A673 (cell line): ENCODE measurements at regions of chr11 and their contacts with region 1.

Region 1: GRCh38 chr11:15074206-15075161 is 1.1 kb downstream of the CALCB start:
- DNase-seq: peak; percentile 86
- H3K4me3 ChIP-seq: peak overlapping the region; percentile 48
- H3K27ac ChIP-seq: no peak overlapping the region
- H3K4me1 ChIP-seq: no peaks in the 10 kb centered on the region
- H3K27me3 ChIP-seq: no peaks in the 10 kb centered on the region
- CTCF ChIP-seq: peak; percentile 78

Region 2: GRCh38 chr11:14537134-14537599 is 537.3 kb before region 1 on chr11:
- CTCF ChIA-PET with region 1: no interaction called
- POLR2A ChIA-PET with region 1: no interaction called
- intact Hi-C with region 1: loop called (anchors 10 kb)
- DNase-seq: peak; percentile 43
- H3K4me3 ChIP-seq: no peak overlapping the region
- H3K27ac ChIP-seq: no peak overlapping the region
- H3K4me1 ChIP-seq: no peaks in the 10 kb centered on the region
- H3K27me3 ChIP-seq: no peaks in the 10 kb centered on the region
- CTCF ChIP-seq: peak; percentile 73

Region 3: DNA sequence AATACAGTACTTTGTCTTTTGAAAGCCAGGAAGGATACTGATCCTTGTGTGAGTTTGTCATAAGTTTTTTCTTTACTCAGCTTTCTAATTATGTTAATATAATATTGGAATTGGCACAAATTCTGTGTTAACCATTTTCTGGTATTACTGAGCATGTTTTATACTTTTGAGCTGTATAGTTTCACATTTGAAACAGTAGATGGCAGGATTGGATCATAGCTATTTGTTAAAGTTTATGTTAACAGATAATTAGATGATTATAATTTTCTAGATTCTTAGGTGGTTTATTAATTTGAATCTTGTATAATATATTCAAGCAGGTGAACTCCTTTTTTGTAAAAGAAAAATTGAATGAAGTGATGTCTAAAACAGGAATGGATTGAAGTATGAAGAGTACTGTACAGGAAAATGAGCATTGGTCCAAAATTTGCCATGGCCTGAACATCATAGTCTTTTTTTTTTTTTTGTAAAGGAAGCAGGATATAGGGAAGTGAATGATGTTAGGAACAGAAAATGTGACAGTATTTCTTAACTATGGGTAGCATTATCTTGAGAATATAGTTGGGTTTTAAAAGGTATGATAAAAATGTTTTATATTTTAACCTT is 284.5 kb before region 1 on chr11:
- CTCF ChIA-PET with region 1: interaction called, 4 read pairs
- POLR2A ChIA-PET with region 1: no interaction called
- intact Hi-C with region 1: loop called (anchors 5 kb)
- DNase-seq: peak; percentile 22
- H3K4me3 ChIP-seq: no peak overlapping the region
- H3K27ac ChIP-seq: no peak overlapping the region
- H3K4me1 ChIP-seq: peaks cover 17% of the 10 kb centered on the region
- H3K27me3 ChIP-seq: no peaks in the 10 kb centered on the region
- CTCF ChIP-seq: peak; percentile 67

Region 4: DNA sequence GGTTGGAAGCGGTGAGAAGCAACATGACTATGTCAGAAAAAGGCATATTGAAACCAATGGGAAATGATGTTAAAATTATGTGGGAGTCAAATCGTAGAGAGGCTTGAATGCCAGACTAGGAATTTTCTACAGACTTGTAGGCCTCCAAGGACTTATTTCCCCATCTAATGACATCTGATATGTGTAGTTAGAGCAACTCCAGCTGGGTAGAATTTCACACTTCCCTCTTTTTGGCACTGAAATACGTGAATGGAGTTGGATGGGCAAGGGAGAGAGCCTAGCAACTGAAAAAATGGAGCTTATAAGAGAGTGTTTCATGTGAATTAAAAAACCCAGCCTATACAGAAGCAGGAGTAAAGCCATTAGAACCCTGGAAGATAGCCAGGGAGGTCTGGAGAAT is 344.4 kb after region 1 on chr11:
- CTCF ChIA-PET with region 1: no interaction called
- POLR2A ChIA-PET with region 1: no interaction called
- intact Hi-C with region 1: no loop called
- DNase-seq: no peak
- H3K4me3 ChIP-seq: no peak overlapping the region
- H3K27ac ChIP-seq: no peak overlapping the region
- H3K4me1 ChIP-seq: no peaks in the 10 kb centered on the region
- H3K27me3 ChIP-seq: no peaks in the 10 kb centered on the region
- CTCF ChIP-seq: no peak

Region 5: GRCh38 chr11:15590132-15590531 is 515.6 kb after region 1 on chr11:
- CTCF ChIA-PET with region 1: interaction called, 11 read pairs
- POLR2A ChIA-PET with region 1: no interaction called
- intact Hi-C with region 1: no loop called
- DNase-seq: peak; percentile 35
- H3K4me3 ChIP-seq: no peak overlapping the region
- H3K27ac ChIP-seq: no peak overlapping the region
- H3K4me1 ChIP-seq: peaks cover 18% of the 10 kb centered on the region
- H3K27me3 ChIP-seq: no peaks in the 10 kb centered on the region
- CTCF ChIP-seq: no peak